WTC11 (cell line): ENCODE measurements at regions of chr12 and their contacts with region 1.

Region 1: DNA sequence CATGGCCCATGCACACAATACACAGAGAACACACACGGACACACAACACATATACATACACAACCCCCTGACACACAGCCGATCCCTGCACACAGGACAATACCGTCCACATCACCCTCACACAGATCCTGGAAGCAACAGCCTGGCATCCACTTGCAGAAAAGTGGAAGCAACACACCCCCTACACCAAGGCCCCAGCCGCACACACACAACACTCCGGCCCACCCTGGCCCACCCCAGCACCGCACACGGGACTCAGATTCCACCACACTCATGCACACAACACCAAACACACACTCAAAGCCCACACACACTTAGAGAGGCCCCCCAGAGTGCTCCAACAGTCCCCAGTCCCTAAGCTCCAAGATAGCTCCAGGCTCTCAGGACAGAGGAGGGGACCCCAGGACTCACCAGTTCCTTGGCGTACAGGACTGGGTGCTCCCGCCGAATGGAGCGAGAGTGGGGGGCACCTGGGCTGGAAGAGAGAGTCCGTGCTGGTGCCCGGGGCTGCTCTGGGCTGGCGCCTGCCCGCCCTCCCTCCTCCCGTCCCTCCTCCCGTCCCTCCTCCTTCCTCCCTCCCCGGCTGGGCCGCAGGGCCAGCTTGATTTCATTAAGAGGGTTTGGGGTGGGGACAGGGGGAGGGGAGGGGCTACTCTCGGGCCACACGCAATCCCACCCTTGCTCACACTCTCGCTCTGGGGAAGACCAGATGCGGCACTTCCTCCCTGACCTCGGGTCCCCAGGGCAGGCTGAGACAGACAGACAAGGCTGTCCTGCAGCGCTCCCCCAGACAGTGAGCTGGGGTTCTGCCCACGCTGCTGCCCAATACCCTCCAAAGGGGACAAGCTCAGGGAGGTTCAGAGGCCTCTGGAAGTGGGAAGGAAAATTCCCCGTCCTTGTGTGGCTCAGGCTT is at the start of gene TMEM119:
- DNase-seq: no peak
- ATAC-seq: peak; percentile 12; the same call in 1 of the 2 replicates
- H3K4me3 Mint-ChIP-seq: no peak within 1 kb of the TSS
- H3K27ac Mint-ChIP-seq: peak within 1 kb of the TSS; percentile 32; the same call in 1 of the 2 replicates
- H3K4me1 Mint-ChIP-seq: peaks cover 5% of the 10 kb centered on the region
- H3K27me3 Mint-ChIP-seq: no peaks in the 10 kb centered on the region
- CTCF ChIP-seq: no peak
- total RNA-seq, gene TMEM119: 0.16 to 0.25 TPM (median 0.20 TPM) in 3 replicates

Region 2: GRCh38 chr12:108576660-108577234 is 21.1 kb before region 1 on chr12:
- CTCF ChIA-PET with region 1: no interaction called
- POLR2A ChIA-PET with region 1: no interaction called
- DNase-seq: no peak
- ATAC-seq: no peak
- H3K4me3 Mint-ChIP-seq: no peak overlapping the region
- H3K27ac Mint-ChIP-seq: no peak overlapping the region
- H3K4me1 Mint-ChIP-seq: no peaks in the 10 kb centered on the region
- H3K27me3 Mint-ChIP-seq: no peaks in the 10 kb centered on the region
- CTCF ChIP-seq: no peak

Region 3: DNA sequence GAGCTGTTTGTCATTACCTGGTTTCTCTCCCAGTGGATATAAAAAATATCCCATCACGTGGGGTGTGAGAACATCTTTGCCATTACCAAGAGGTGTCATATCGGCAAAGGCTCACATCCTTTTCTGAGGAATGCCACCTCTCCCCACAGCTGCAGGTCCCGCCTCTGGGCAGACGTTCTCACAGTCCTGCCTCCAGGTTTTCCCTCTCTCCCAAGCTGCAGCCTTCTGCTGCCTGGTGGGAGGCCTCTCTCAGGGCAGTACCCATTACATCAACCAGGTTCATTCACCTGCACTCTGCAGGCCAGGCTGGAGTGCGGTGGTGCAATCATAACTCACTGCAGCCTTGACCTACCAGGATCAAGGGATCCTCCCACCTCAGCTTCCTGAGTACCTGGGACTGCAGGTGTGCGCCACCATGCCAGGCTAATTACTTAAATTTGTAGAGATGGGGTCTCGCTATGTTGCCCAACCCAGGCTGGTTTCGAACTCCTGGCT is 15.0 kb after region 1 on chr12:
- CTCF ChIA-PET with region 1: interaction called, 11 read pairs
- POLR2A ChIA-PET with region 1: no interaction called
- DNase-seq: peak; percentile 51
- ATAC-seq: peak; percentile 74
- H3K4me3 Mint-ChIP-seq: no peak overlapping the region
- H3K27ac Mint-ChIP-seq: no peak overlapping the region; the same call in 1 of the 2 replicates
- H3K4me1 Mint-ChIP-seq: peaks cover 21% of the 10 kb centered on the region
- H3K27me3 Mint-ChIP-seq: peaks cover 2% of the 10 kb centered on the region; the same call in 1 of the 2 replicates
- CTCF ChIP-seq: no peak